Activated CD4-positive, alpha-beta T cell treated with anti-CD3 and anti-CD28 coated beads for 36 hours (primary cell): ENCODE measurements at regions of chr16 and their contacts with region 1.

Region 1: GRCh38 chr16:51762081-51762996 is 611.3 kb upstream of the SALL1 start:
- DNase-seq: peak; percentile 79
- ATAC-seq: peak; percentile 42
- H3K4me3 Mint-ChIP-seq: no peak overlapping the region
- H3K27ac Mint-ChIP-seq: no peak overlapping the region
- H3K4me1 Mint-ChIP-seq: no peaks in the 10 kb centered on the region
- H3K27me3 Mint-ChIP-seq: peaks cover 12% of the 10 kb centered on the region

Region 2: DNA sequence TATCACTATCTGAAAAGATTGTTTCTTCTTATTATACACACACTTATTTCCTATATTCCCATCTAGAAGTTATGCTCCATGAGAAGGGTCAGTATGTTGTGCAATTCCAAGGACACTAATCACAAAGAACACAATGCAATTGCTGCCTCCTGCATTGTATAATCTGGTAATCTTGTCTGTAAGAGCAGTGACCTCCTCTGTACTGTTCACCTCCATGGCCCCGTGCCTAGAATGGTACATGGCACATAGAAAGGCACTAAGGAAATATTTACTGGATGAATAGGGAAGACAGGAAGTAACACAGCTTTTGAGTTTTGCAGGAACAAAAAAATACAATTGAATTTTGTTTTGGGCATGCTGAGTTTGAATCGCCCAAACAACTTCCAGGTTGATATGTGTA is 396.6 kb before region 1 on chr16:
- CTCF ChIA-PET with region 1: no interaction called
- POLR2A ChIA-PET with region 1: no interaction called
- intact Hi-C with region 1: loop called in 1 of 2 experiments (anchors 10 kb)
- DNase-seq: no peak
- ATAC-seq: no peak
- H3K4me3 Mint-ChIP-seq: no peak overlapping the region
- H3K27ac Mint-ChIP-seq: no peak overlapping the region
- H3K4me1 Mint-ChIP-seq: no peaks in the 10 kb centered on the region
- H3K27me3 Mint-ChIP-seq: no peaks in the 10 kb centered on the region

Region 3: DNA sequence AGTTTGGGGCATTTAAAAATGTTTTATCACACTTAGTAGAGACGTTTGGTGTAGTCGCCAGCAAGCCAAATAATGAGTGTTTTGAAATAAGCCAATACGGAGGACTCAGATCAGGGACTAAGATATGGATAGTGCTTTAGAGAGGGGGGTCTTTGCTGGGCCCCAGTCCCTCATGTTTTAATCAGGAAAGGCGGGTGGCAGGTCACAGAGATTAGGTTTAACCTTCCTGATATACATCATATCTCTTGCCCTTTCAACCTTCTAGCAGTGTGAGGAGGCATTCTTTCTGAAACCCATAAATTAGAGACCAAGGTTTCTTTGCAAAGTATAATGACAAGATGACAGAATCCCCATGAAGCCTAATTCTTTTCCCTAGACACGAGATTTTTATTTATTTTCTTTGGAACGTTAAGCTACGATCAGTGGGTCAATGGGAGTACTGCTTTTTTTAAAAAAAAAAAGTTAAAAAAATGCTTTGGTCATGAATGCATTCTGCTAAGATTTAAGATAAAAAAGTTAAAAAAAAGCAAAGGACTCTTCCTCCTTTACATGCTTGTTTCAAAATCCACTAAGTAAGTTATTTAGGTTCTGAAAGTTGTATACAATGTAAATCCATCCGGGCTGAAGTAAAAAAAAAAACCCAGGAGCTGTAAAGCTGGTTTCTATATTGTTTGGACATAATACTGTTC is 39.2 kb before region 1 on chr16:
- CTCF ChIA-PET with region 1: no interaction called
- POLR2A ChIA-PET with region 1: no interaction called
- intact Hi-C with region 1: no loop called
- DNase-seq: no peak
- ATAC-seq: no peak
- H3K4me3 Mint-ChIP-seq: no peak overlapping the region
- H3K27ac Mint-ChIP-seq: no peak overlapping the region
- H3K4me1 Mint-ChIP-seq: no peaks in the 10 kb centered on the region
- H3K27me3 Mint-ChIP-seq: no peaks in the 10 kb centered on the region